ENCODE measurements at regions of chr11 and their contacts with region 1.

Region 1: DNA sequence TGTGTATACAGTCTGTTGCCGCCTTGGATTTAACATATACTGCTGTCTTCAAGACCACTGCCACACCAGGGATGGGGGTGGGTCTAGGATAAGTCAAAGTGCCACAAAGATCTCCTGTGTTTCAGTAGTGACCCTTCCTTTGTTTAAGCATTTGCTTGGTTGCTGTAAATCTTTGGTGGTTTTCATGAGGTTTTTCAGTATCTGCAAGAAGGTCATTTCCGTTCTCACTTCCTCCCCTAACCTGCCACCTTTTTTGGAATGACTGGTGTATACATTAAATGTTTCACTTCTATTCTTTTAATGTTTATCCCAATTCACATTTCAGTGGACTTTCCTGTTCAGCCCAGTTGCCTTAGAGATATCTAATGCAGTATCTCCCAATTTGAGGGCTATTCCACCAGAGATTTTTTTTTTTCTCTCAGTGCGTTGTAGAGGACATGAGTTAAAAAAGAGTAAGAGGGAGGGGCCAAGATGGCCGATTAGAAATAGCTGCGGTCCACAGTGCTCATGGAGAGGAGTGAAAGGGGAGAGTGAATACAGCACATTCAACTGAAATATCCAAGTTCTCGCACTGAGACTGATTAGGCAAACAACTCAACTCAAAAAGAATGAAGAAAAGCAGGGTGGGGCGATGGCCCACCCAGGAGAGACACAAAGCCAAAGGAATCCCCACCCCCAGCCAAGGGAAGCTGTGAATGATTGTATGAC is 43.2 kb downstream of the USP47 start:
- H3K4me3 Mint-ChIP-seq: no peak overlapping the region
- H3K27ac Mint-ChIP-seq: no peak overlapping the region
- H3K4me1 Mint-ChIP-seq: peaks cover 22% of the 10 kb centered on the region
- H3K27me3 Mint-ChIP-seq: no peaks in the 10 kb centered on the region

Region 2: DNA sequence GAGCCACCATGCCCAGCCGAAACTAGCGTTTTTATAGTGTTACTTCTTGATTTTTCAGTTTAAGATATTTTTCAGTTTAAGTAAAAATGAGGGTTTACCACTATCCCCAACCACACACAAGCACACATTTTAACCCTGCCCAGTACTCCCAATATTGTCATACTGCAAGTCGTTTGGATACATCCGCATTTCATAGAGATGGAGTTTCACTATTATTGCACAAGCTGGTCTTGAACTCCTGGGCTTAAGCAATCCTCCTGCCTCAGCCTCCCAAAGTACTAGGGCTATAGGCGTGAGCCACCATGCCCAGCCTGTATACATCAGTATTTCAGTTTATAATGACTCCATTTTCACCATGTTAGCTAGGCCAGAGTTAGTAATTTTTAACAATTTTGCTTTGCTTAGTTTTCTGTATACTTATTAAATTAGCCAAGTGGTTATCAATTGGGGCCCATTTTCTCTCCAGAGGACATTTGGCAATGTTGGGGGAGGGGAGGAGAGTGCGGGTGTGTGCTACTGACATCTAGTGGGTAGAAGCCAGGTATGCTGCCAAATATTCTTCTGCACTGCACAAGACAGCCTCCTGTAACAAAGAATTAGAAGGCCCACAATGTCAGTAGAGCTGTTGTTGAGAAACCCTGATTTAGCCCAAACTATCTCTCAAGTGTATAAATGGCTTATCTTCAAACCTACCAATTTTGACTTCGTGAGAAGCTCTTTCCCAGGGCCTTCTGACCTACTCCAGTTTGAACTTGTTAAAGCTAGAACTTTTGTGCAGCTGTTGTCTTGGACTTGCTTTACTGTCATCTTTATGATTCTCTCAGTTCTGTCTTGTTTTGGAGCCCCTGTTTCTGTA is 35.8 kb before region 1 on chr11:
- intact Hi-C with region 1: loop called (anchors 5 kb)
- H3K4me3 Mint-ChIP-seq: no peak overlapping the region
- H3K27ac Mint-ChIP-seq: no peak overlapping the region
- H3K4me1 Mint-ChIP-seq: peaks cover 41% of the 10 kb centered on the region
- H3K27me3 Mint-ChIP-seq: no peaks in the 10 kb centered on the region

Region 3: GRCh38 chr11:11987503-11988022 is 102.6 kb after region 1 on chr11:
- intact Hi-C with region 1: no loop called
- H3K4me3 Mint-ChIP-seq: no peak overlapping the region
- H3K27ac Mint-ChIP-seq: no peak overlapping the region
- H3K4me1 Mint-ChIP-seq: peaks cover 5% of the 10 kb centered on the region
- H3K27me3 Mint-ChIP-seq: peaks cover 4% of the 10 kb centered on the region

Region 4: DNA sequence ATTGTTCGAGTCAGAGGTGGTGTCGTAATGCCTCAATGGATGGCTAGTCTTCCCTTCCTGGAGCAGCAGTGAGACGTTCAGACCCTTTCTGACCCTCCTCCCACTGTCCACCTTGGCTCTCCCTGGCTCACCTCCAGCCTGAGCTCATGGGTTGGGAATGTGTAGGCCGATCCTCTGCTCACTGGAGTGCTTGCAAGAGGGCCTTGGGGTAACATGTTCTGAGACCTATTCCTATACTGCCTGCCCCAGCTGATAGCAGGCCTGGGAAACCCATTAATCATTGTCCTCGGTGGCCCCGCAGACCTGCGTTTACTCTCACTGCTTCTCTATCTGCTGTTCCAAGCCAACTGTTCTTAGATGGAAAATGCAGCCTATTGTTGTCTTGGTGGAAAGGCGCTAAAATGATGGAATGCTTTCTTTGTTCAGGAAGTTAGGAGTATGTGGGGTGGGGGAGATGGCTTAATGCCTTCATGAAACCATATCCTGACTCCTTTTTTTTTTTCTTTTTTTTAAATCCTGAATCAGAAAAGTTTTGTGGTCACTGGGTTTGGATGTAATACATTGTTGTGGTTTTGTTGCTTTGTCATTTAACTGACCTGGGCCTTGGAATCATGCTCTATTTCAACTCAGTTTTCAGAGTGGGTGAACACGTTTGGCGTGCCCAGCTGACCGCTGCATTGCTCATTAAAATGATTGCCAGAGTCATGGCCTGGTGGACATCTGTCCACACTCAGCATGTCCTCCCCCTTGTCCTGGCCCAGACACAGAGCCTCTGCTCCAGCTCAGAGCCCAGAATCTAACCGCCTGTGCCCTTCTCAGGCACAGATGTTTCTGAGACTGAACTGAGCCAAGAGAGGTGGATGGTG is 298.0 kb after region 1 on chr11:
- intact Hi-C with region 1: no loop called
- H3K4me3 Mint-ChIP-seq: no peak overlapping the region
- H3K27ac Mint-ChIP-seq: no peak overlapping the region
- H3K4me1 Mint-ChIP-seq: peaks cover 44% of the 10 kb centered on the region
- H3K27me3 Mint-ChIP-seq: no peaks in the 10 kb centered on the region